CD4-positive, alpha-beta memory T cell (primary cell): ENCODE measurements at regions of chr19 and their contacts with region 1.

Region 1: DNA sequence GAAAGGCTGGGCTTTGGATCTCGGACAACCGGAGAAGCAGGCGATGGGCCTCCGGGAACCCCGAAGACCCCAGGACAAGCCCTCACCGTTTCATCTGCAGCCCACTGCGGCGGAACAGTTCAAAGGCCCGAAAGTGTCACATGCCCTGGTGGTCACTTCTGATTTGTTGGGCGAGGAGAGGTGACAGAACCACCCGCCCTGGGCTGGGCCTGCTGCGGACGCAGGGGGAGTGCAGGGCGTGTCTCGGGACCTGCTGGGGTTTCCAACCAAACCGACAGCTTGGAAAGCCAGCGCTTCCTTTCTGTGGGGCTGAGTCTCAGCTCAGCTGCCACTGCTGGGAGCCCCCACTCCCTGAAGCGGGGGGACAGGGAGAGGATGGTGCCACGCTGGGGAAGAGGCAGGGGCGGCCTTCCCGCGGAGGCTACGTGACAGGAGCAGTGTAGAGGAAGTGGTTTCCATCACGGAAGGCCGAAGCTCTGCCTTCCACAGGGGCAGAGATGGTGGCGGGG is 22.8 kb upstream of the ZBTB7A start:
- DNase-seq: peak; percentile 42 to 71 (median 53)
- H3K4me3 ChIP-seq: no peak overlapping the region
- H3K4me3 Mint-ChIP-seq: peak overlapping the region; percentile 67 to 84 (median 72)
- H3K27ac ChIP-seq: peak overlapping the region; percentile 46
- H3K27ac Mint-ChIP-seq: peak overlapping the region; percentile 90 to 94 (median 92)
- H3K4me1 ChIP-seq: peaks cover 53% of the 10 kb centered on the region
- H3K4me1 Mint-ChIP-seq: peaks cover 16 to 53% (median 38%) of the 10 kb centered on the region in 4 donors
- H3K27me3 ChIP-seq: no peaks in the 10 kb centered on the region
- H3K27me3 Mint-ChIP-seq: no peaks in the 10 kb centered on the region

Region 2: DNA sequence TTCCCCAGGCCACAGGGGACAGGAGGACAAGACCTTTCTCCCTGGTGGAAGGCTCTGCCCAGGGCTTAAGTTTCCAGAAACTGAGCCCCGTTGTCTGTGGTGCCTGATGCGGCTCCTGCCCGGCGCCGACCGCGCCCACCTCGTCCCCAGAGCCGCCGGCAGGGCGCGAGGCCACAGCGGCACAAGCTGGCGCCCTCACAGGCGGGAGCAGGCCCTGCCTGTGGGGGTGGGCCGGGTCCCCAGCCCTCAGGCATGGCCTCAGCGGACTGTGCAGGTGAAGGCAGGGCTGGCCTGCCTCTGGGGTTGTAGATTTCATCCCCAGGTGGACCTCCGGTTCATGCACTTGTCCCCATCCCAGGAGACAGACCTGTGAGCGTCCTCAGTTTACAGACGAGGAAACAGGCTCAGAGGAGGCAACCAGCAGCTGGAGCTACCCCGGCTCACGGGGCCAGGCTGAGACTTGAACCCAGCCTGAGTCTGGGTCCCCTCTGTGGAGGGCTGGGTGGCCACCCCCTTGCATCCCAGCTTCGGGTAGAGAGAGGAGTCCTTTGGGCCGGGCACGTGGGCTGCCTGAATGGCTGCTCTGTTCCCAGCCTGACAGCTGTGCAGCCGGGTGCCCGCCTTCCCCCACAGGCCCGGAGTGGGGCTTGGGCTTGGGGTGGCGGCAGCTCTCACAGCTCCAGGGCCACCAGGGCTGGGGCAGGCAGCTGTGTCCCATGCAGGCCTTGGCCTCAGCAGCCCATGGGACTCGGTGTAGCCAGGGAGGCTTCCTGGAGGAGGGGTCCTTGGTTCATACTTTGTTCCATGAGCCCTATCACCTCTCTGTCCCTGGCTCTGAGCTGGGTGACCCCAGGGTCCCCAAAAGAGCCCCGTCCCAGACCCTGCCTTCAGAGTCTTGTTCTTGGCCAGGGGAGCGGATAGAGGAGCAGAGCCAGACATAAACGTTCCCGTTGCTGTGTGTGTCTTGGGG is 55.1 kb before region 1 on chr19:
- CTCF ChIA-PET with region 1: no interaction called
- POLR2A ChIA-PET with region 1: no interaction called
- intact Hi-C with region 1: no loop called
- DNase-seq: peak in 1 of 5 donors; percentile 33
- H3K4me3 ChIP-seq: no peak overlapping the region
- H3K4me3 Mint-ChIP-seq: no peak overlapping the region
- H3K27ac ChIP-seq: no peak overlapping the region
- H3K27ac Mint-ChIP-seq: no peak overlapping the region
- H3K4me1 ChIP-seq: no peaks in the 10 kb centered on the region
- H3K4me1 Mint-ChIP-seq: no peaks in the 10 kb centered on the region
- H3K27me3 ChIP-seq: no peaks in the 10 kb centered on the region
- H3K27me3 Mint-ChIP-seq: no peaks in the 10 kb centered on the region

Region 3: DNA sequence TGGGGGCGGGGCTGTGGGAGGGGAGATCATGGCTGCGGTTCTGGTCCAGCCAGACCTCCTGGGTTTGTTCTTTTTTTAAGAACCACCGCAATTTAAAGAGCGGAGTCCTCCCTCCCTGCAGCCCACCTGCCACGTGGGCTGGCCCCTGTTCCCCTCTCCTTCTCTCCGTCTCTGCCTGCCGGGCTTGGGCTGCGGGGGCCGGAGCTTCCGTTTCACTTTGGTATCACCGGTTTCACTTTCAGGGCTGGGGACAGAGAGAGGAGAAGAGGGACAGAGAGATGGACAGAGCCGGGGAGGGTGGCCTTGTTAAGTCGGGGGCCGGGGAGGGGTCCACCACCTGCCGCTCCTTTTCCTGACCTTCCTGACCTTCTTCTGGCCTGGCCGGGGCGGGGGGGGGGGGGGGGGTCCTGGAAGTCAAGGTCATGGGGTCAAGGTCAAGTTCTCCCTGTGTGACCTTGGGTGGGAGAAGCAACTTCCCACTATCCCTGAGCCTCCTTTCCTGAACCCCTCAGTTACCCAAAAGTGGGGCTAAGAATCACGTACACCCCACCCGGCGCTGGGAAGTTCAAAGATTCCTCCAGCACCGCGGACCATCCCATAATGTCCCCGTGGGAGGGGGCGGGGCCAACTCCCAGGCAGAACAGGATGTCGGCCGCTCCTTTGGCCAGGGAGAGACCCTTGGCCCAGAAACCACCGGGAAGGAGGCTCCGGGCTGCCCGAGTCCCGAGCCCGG is 11.4 kb before region 1 on chr19:
- CTCF ChIA-PET with region 1: interaction called, 3 read pairs
- POLR2A ChIA-PET with region 1: interaction called, 20 read pairs
- intact Hi-C with region 1: no loop called
- DNase-seq: peak in 4 of 5 donors; percentile 34 to 59 (median 40)
- H3K4me3 ChIP-seq: peak overlapping the region; percentile 64 to 65
- H3K4me3 Mint-ChIP-seq: peak overlapping the region; percentile 85 to 93 (median 88)
- H3K27ac ChIP-seq: peak overlapping the region; percentile 65
- H3K27ac Mint-ChIP-seq: peak overlapping the region; percentile 71 to 94 (median 92)
- H3K4me1 ChIP-seq: peaks cover 29% of the 10 kb centered on the region
- H3K4me1 Mint-ChIP-seq: peaks cover 4 to 24% (median 17%) of the 10 kb centered on the region in 4 donors
- H3K27me3 ChIP-seq: no peaks in the 10 kb centered on the region
- H3K27me3 Mint-ChIP-seq: no peaks in the 10 kb centered on the region

Region 4: DNA sequence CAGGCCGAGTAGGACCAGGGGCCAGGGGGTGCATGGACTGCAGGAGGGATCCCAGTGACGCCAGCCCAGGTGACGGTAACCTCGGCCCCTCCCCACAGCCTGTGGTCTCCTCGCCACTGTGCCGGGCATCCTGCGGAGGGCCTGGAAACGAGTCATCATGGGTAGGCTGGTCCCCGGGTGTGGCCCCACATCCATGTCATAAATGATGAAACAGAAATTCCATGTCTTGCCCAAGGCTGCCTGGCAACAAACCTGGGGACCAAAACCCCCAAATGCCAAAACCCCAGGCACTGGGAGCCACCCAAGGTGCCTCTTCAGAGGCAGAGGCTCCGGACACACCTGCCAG is 13.6 kb after region 1 on chr19:
- CTCF ChIA-PET with region 1: interaction called, 6 read pairs
- POLR2A ChIA-PET with region 1: interaction called, 57 read pairs
- intact Hi-C with region 1: loop called (anchors 1 kb)
- DNase-seq: no peak
- H3K4me3 ChIP-seq: no peak overlapping the region
- H3K4me3 Mint-ChIP-seq: no peak overlapping the region
- H3K27ac ChIP-seq: no peak overlapping the region
- H3K27ac Mint-ChIP-seq: peak overlapping the region in 1 of 7 donors; percentile 91
- H3K4me1 ChIP-seq: peaks cover 42% of the 10 kb centered on the region
- H3K4me1 Mint-ChIP-seq: peaks cover 15 to 43% (median 22%) of the 10 kb centered on the region in 4 donors
- H3K27me3 ChIP-seq: no peaks in the 10 kb centered on the region
- H3K27me3 Mint-ChIP-seq: no peaks in the 10 kb centered on the region